CD4-positive, alpha-beta T cell (primary cell): ENCODE measurements at regions of chr12 and their contacts with region 1.

Region 1: GRCh38 chr12:4648501-4649357 is at the starts of genes AKAP3 and NDUFA9:
- DNase-seq: peak; percentile 65 to 89 (median 72)
- ATAC-seq: peak; percentile 96
- H3K4me3 ChIP-seq: peak within 1 kb of the TSS; percentile 93
- H3K4me3 Mint-ChIP-seq: peak within 1 kb of the TSS; percentile 92
- H3K27ac ChIP-seq: peak within 1 kb of the TSS; percentile 67 to 72
- H3K27ac Mint-ChIP-seq: peak within 1 kb of the TSS; percentile 95
- H3K4me1 ChIP-seq: peaks cover 16% of the 10 kb centered on the region
- H3K4me1 Mint-ChIP-seq: peaks cover 53% of the 10 kb centered on the region
- H3K27me3 ChIP-seq: no peaks in the 10 kb centered on the region
- H3K27me3 Mint-ChIP-seq: no peaks in the 10 kb centered on the region
- CTCF ChIP-seq: no peak
- total RNA-seq, gene AKAP3: 0.96 to 2.0 TPM
- total RNA-seq, gene NDUFA9: 77.2 to 79.2 TPM

Region 2: DNA sequence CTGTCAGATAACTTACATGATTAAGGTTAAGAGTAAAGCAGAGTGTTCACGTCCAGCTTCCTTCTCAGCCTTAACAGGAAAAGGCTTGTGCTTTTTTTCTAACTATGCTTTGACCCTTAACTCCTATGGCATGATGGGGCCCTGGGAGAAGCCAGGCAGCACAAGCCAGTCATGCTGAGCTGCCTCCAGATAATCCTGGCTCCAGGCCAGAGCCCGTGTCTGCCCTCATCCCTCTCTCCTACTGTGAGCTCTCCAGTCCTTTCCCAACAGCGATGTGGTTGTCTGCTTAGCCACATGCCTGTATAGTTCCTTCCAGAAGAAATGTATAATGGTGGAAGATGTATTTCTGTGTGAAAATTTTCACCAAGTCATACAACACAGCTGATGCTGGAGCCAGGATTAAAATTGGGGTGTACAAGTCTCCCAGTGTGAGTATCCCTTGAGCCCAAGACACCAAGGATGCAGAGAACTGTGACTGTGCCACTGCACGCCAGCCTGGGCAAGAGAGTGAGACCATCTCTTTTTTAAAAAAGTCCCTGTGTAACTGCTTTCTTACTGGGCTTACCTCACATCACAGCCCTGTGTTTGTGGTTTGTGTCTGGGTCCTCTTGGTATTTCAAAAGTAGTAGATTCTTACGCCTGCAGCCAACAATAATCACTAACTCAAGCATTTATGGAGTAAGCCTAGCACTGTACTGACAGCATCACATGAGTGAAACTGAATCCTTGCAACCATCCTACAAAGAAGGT is 1844.2 kb before region 1 on chr12:
- CTCF ChIA-PET with region 1: no interaction called
- POLR2A ChIA-PET with region 1: no interaction called
- intact Hi-C with region 1: loop called in 1 of 2 experiments (anchors 10 kb)
- DNase-seq: no peak
- ATAC-seq: no peak
- H3K4me3 ChIP-seq: no peak overlapping the region
- H3K4me3 Mint-ChIP-seq: no peak overlapping the region
- H3K27ac ChIP-seq: no peak overlapping the region
- H3K27ac Mint-ChIP-seq: no peak overlapping the region
- H3K4me1 ChIP-seq: no peaks in the 10 kb centered on the region
- H3K4me1 Mint-ChIP-seq: no peaks in the 10 kb centered on the region
- H3K27me3 ChIP-seq: no peaks in the 10 kb centered on the region
- H3K27me3 Mint-ChIP-seq: no peaks in the 10 kb centered on the region
- CTCF ChIP-seq: no peak

Region 3: DNA sequence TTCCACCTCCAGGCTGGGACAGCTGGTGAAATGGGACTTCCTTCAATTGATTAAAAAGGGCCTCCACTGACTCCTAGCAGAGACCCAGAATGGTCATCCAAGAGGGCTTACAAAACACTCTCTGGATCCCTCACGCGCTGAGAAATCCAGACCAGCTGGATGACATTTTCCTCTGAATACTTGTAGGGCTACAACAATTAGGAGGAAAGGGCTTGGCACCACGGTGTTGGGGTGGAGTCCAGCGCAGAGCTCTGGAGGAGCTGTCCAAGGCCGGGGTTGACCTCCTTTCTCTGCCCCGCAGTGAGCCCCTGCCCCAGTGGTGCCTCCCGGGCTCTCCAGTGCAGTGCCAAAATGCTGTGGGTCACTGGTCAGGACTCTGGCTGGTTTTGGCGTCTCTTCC is 564.2 kb before region 1 on chr12:
- CTCF ChIA-PET with region 1: no interaction called
- POLR2A ChIA-PET with region 1: no interaction called
- intact Hi-C with region 1: no loop called
- DNase-seq: no peak
- ATAC-seq: no peak
- H3K4me3 ChIP-seq: no peak overlapping the region
- H3K4me3 Mint-ChIP-seq: no peak overlapping the region
- H3K27ac ChIP-seq: no peak overlapping the region
- H3K27ac Mint-ChIP-seq: no peak overlapping the region
- H3K4me1 ChIP-seq: no peaks in the 10 kb centered on the region
- H3K4me1 Mint-ChIP-seq: no peaks in the 10 kb centered on the region
- H3K27me3 ChIP-seq: no peaks in the 10 kb centered on the region
- H3K27me3 Mint-ChIP-seq: no peaks in the 10 kb centered on the region
- CTCF ChIP-seq: no peak

Region 4: DNA sequence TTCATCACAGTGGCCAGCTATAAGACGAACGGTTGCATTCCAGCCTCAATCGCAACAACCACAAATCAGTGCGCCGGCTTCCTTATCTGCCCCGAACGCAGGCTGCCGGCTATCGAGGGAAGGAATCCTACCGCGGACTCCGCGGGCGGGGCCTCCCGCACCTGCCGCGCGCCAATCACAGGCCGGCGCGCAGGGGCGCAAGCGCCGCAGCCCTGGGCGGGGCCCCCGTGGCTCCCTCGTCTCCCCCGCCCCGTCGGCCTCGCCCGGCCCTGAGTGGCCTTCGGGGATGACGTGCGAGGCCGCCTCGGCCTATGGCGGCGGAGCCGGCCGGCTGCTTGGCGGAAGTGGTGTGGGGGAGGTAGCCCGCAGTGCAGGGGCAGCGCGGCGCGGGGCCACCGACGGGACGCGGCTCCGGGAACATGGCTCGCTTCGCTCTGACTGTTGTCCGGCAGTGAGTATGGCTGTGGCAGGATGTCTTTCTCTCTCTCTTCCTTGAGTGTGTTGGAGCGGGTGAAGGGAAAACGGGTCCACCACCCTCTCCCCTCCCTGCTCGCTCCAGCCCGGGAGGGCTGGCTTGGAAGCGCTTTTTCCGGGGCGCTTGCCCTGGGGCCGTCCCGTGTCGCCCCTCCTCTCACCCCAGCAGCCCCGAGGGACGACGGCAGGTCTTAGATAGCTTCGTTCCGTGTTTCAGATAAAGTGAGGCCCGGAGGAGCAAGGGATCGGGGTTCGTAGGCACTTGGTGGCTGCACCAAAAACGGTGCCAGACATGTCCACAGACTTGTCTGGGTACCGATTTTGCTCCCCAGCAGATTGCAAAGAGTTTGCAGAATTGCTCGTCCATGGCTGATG is 327.7 kb before region 1 on chr12 and contains the start of gene TIGAR:
- CTCF ChIA-PET with region 1: no interaction called
- POLR2A ChIA-PET with region 1: interaction called, 3 read pairs
- intact Hi-C with region 1: loop called in 1 of 2 experiments (anchors 10 kb)
- DNase-seq: peak; percentile 75 to 97 (median 86)
- ATAC-seq: peak; percentile 94
- H3K4me3 ChIP-seq: peak within 1 kb of the TSS; percentile 85
- H3K4me3 Mint-ChIP-seq: peak within 1 kb of the TSS; percentile 84
- H3K27ac ChIP-seq: peak within 1 kb of the TSS; percentile 80 to 86
- H3K27ac Mint-ChIP-seq: peak within 1 kb of the TSS; percentile 84
- H3K4me1 ChIP-seq: peaks cover 26% of the 10 kb centered on the region
- H3K4me1 Mint-ChIP-seq: peaks cover 44% of the 10 kb centered on the region
- H3K27me3 ChIP-seq: no peaks in the 10 kb centered on the region
- H3K27me3 Mint-ChIP-seq: no peaks in the 10 kb centered on the region
- CTCF ChIP-seq: no peak
- total RNA-seq, gene TIGAR: 5.3 to 7.1 TPM

Region 5: DNA sequence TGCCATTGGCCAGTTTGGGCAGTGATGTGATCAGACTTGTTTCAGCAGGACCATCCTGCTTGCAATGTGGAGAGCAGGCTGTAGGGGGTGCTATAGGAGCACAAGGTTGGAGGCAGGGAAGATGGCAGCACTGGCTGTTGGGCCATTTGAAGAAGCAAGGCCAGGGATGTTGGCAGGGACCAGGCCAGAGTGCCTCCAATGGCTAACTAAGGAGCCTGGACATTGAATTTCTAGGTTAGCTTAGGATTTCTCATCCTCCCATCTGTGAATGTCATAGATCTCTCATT is 292.7 kb before region 1 on chr12:
- CTCF ChIA-PET with region 1: no interaction called
- POLR2A ChIA-PET with region 1: no interaction called
- intact Hi-C with region 1: loop called (anchors 10 kb)
- DNase-seq: peak in 13 of 14 experiments; percentile 7 to 57 (median 29)
- ATAC-seq: peak; percentile 32
- H3K4me3 ChIP-seq: no peak overlapping the region
- H3K4me3 Mint-ChIP-seq: no peak overlapping the region
- H3K27ac ChIP-seq: no peak overlapping the region
- H3K27ac Mint-ChIP-seq: no peak overlapping the region
- H3K4me1 ChIP-seq: peaks cover 3% of the 10 kb centered on the region
- H3K4me1 Mint-ChIP-seq: peaks cover 6% of the 10 kb centered on the region
- H3K27me3 ChIP-seq: no peaks in the 10 kb centered on the region
- H3K27me3 Mint-ChIP-seq: no peaks in the 10 kb centered on the region
- CTCF ChIP-seq: peak; percentile 22

Region 6: DNA sequence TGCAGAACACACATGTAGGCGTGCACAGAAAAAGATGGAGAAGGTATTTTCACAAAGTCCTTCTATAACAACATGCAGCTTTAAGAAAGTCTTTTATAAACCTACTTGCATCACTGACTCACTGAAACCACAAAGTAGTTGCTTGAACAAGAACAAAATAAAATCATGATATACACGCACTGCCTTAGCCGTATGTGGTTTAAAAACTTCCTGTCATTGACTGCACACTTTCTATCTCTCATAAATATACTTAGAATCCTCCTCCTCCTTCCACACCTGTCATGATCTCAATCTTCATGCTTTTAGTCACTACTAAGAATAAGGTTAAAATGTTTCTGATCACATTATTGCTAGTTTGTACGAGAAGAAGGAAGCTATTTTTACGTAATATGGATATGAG is 141.9 kb before region 1 on chr12:
- CTCF ChIA-PET with region 1: no interaction called
- POLR2A ChIA-PET with region 1: interaction called, 10 read pairs
- intact Hi-C with region 1: no loop called
- DNase-seq: peak in 4 of 14 experiments; percentile 19 to 79 (median 74)
- ATAC-seq: peak; percentile 94
- H3K4me3 ChIP-seq: peak overlapping the region; percentile 17
- H3K4me3 Mint-ChIP-seq: peak overlapping the region; percentile 81
- H3K27ac ChIP-seq: peak overlapping the region in 1 of 2 donors; percentile 33
- H3K27ac Mint-ChIP-seq: peak overlapping the region; percentile 84
- H3K4me1 ChIP-seq: no peaks in the 10 kb centered on the region
- H3K4me1 Mint-ChIP-seq: peaks cover 36% of the 10 kb centered on the region
- H3K27me3 ChIP-seq: no peaks in the 10 kb centered on the region
- H3K27me3 Mint-ChIP-seq: no peaks in the 10 kb centered on the region
- CTCF ChIP-seq: no peak

Region 7: DNA sequence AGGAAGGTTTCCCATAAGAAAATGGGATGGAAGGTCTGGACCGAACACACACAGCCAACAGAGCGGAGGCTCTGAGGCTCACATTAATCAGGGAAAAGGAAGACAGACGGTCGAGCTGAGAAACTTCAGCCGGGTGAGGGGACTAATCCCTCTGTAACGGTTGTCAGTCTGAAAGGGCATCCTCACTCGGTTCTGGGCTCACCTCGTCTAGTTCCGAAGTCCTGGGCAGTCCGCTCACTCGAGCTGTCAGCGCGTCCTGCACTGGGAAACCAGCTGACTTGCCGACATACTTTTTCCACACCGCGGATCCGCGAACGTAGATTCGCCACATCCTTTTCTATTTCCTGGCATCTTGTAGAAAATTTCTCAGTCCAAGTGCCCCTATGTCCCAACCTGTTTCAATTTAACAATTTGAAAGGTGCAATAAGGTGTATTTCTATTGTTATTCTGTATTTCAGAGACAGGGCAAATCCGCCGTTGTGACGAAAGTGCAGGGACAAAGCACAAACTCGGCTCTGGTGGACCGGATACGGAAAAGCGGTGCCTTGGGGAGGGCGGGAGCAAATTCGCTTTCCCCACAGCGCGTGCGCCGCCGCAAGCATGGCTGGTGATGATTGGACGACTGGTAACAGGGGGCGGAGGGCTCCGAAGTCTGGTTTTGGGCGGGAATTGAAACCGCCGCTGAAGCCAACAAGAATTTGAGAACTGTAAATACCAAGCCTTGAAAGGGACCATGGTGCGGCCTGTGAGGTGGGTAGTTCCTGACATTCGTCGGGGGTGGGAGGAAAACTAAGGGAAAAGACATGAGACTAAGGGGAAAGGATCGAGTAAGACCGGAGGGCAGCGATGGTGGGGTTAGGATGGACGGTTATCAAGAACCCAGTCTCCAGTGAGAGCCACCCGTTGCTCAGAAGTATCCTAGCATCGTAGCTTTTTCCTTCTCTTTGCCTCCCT is 110.2 kb before region 1 on chr12 and contains the start of gene RAD51AP1:
- CTCF ChIA-PET with region 1: no interaction called
- POLR2A ChIA-PET with region 1: interaction called, 5 read pairs
- intact Hi-C with region 1: loop called in 1 of 2 experiments (anchors 2 kb)
- DNase-seq: peak; percentile 89 to 99 (median 94)
- ATAC-seq: peak; percentile 99
- H3K4me3 ChIP-seq: peak within 1 kb of the TSS; percentile 80
- H3K4me3 Mint-ChIP-seq: peak within 1 kb of the TSS; percentile 98
- H3K27ac ChIP-seq: peak within 1 kb of the TSS; percentile 81 to 95
- H3K27ac Mint-ChIP-seq: peak within 1 kb of the TSS; percentile 99
- H3K4me1 ChIP-seq: peaks cover 7% of the 10 kb centered on the region
- H3K4me1 Mint-ChIP-seq: peaks cover 37% of the 10 kb centered on the region
- H3K27me3 ChIP-seq: no peaks in the 10 kb centered on the region
- H3K27me3 Mint-ChIP-seq: no peaks in the 10 kb centered on the region
- CTCF ChIP-seq: no peak
- total RNA-seq, gene RAD51AP1: 0.45 to 0.93 TPM

Region 8: DNA sequence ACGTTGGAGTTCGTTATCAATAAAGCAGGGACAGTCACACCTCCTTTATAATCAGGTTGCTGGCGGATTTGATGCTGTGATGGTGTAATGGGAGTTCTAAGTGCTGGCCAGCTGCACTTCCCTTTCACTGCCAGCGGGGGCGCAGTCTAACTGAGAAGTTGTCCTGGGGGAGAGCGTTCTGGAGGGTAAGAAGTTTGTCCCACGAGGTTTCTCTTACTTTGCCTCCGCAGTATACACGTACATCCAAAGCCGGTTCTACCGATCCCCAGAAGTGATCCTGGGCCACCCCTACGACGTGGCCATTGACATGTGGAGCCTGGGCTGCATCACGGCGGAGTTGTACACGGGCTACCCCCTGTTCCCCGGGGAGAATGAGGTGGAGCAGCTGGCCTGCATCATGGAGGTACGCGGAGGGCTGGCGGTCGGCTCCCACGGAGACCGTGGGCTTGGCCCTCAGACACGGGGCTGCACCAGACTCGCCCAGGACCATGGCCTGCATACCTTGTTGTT is 44.0 kb before region 1 on chr12:
- CTCF ChIA-PET with region 1: interaction called, 27 read pairs
- POLR2A ChIA-PET with region 1: interaction called, 12 read pairs
- intact Hi-C with region 1: loop called (anchors 1 to 5 kb)
- DNase-seq: peak; percentile 65 to 88 (median 70)
- ATAC-seq: peak; percentile 96
- H3K4me3 ChIP-seq: peak overlapping the region; percentile 72
- H3K4me3 Mint-ChIP-seq: peak overlapping the region; percentile 89
- H3K27ac ChIP-seq: no peak overlapping the region
- H3K27ac Mint-ChIP-seq: peak overlapping the region; percentile 80
- H3K4me1 ChIP-seq: peaks cover 4% of the 10 kb centered on the region
- H3K4me1 Mint-ChIP-seq: peaks cover 40% of the 10 kb centered on the region
- H3K27me3 ChIP-seq: no peaks in the 10 kb centered on the region
- H3K27me3 Mint-ChIP-seq: peaks cover 7% of the 10 kb centered on the region
- CTCF ChIP-seq: peak; percentile 99